Mammary epithelial cell (primary cell): ENCODE measurements at regions of chr5 and their contacts with region 1.

Region 1: GRCh38 chr5:42701351-42702059 is 55.1 kb upstream of the CCDC152 start:
- DNase-seq: no peak
- H3K4me3 ChIP-seq: no peak overlapping the region
- H3K27ac ChIP-seq: no peak overlapping the region
- H3K4me1 ChIP-seq: no peaks in the 10 kb centered on the region
- H3K27me3 ChIP-seq: no peaks in the 10 kb centered on the region
- CTCF ChIP-seq: no peak

Region 2: GRCh38 chr5:42621242-42621641 is 80.3 kb before region 1 on chr5:
- CTCF ChIA-PET with region 1: no interaction called
- dilution Hi-C with region 1: loop called (anchors 5 kb)
- in situ Hi-C with region 1: no loop called
- intact Hi-C with region 1: no loop called
- DNase-seq: no peak
- H3K4me3 ChIP-seq: no peak overlapping the region
- H3K27ac ChIP-seq: no peak overlapping the region
- H3K4me1 ChIP-seq: peaks cover 5% of the 10 kb centered on the region
- H3K27me3 ChIP-seq: no peaks in the 10 kb centered on the region
- CTCF ChIP-seq: no peak

Region 3: DNA sequence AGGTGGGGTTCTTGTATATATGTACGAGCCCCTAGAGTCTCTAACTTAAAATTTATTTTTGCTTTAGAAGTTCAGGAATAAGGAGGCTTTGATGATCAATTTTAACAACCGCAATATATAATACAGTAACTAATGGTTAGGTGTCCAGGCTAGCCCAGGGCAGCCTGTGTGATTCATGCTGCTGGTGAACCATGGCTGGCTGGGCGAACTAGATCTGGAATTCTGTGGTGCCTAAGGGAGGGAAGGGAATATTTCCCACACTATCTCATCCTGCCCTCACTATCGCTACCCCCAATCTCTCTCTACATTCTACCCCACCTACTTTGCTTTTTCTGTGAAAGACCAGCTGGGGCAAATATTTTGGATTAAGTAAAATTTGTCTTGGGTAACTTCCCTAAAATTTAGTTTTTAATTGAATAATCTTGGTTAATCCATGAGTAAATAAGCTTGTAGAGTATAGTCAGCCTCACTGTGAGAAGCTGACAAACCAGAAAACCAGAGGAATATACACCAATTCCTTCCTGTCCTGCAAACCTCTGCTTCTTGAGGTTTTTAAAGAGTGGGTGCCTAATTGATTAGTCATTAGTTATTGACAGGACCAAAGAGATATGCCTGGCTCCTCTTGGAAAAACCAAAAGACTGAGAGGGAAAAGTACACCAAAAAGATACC is 60.0 kb before region 1 on chr5:
- CTCF ChIA-PET with region 1: no interaction called
- dilution Hi-C with region 1: no loop called
- in situ Hi-C with region 1: no loop called
- intact Hi-C with region 1: no loop called
- DNase-seq: peak; percentile 84
- H3K4me3 ChIP-seq: peak overlapping the region in 1 of 3 experiments; percentile 1
- H3K27ac ChIP-seq: peak overlapping the region; percentile 80
- H3K4me1 ChIP-seq: peaks cover 25% of the 10 kb centered on the region
- H3K27me3 ChIP-seq: no peaks in the 10 kb centered on the region
- CTCF ChIP-seq: no peak

Region 4: DNA sequence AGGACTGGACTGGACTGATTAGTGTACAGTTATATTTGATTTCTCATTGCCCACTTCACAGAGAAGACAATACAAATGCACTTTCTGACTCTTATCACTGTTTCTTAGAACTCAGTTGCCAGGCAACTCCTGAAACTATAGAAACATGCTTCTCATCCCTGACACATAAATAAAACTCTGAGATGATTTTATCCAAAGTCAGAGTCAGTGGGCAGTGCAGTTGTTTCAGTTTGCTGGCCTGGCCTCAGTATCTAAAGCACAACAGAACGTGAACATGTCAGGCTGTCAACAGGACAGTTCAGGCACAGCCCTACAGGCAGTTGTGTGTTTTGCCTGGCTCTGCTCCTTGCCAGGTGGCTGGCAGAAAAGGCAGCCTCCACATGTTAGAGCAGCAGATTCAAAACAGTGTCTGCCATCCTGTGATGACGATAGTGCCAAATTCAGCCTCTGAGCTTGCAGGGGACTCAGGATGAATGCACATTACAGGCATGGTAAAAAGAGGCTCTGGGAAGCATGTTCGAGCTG is 10.0 kb before region 1 on chr5:
- CTCF ChIA-PET with region 1: no interaction called
- dilution Hi-C with region 1: no loop called
- in situ Hi-C with region 1: no loop called
- intact Hi-C with region 1: loop called (anchors 1 kb)
- DNase-seq: peak; percentile 34
- H3K4me3 ChIP-seq: no peak overlapping the region
- H3K27ac ChIP-seq: no peak overlapping the region
- H3K4me1 ChIP-seq: peaks cover 4% of the 10 kb centered on the region
- H3K27me3 ChIP-seq: no peaks in the 10 kb centered on the region
- CTCF ChIP-seq: peak in 1 of 2 donors; percentile 5